Body of pancreas (tissue), 4 donors: ENCODE measurements at regions of chr2 and their contacts with region 1.

Region 1: DNA sequence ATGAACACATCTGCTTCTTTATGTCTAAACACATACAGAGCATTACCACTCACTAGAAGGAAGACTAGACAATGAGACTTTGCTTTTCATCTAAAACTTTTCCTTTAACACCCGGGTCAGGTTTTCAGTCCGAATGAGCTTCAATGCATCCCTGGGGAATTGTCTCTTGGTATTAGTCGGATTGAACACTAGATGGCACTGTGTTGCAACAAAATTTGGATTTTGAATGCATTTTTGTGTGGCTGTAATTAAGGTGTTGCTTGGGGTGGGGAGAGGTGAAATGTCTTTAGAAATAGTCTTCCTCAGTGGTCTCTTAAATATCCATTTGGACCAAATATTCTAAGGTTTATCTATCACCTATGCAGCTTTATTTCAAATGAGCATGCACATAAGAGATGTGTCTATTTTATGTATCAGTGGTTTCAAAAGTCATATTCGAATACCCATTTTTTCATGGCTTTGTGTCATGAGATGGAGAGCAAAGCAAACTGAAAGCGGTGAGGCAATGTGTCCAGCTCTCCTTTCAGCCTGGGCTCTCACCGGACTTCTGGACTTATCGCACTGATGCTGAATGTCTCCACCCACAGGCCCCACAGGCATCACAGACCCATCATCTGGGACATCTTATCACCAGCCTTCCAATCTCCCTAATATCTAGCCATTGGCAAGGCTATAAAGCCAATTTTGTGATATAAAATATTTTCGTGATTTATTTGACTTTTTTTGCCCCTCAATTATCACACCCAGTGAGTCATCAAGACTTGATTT is 510.3 kb downstream of the RNF144A start:
- DNase-seq: peak in 1 of 4 donors; percentile 15
- ATAC-seq: peak; percentile 62
- H3K4me3 ChIP-seq: no peak overlapping the region
- H3K27ac ChIP-seq: no peak overlapping the region
- H3K4me1 ChIP-seq: no peaks in the 10 kb centered on the region
- H3K27me3 ChIP-seq: no peaks in the 10 kb centered on the region
- CTCF ChIP-seq: peak; percentile 43 to 78 (median 75)
- POLR2A ChIP-seq: no peak

Region 2: DNA sequence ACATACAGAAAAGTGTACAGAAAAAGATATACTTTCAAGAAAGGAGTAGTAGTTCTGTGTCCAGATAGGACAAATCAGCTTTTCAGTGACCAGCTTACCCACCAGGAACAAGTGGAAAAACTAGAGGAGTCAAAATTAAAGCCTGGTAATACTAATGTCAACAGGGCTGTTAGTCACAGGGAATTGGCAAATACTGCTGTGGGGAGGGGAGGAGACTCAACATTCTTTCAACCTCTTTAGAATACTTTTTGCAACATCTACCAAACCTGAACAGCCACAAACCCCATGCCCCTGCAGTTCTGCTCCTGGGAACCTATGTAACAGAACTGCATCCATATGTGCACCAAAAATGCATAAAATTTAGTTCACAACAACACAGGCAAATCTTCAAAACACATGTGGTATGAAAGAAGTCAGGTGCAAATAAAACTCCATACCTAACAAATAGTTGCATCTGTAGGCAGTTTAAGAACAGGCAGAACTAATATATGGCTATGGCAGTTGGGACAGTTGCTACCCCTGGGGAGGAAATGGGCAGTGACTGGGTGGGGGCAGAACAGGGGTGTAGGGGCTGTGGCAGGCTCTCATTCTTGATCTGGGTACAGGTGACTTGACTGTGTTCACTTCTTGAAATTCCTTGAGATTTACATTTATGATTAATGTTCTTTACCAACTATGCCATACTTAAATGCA is 571.5 kb before region 1 on chr2:
- intact Hi-C with region 1: no loop called
- DNase-seq: no peak
- ATAC-seq: no peak
- H3K4me3 ChIP-seq: no peak overlapping the region
- H3K27ac ChIP-seq: no peak overlapping the region
- H3K4me1 ChIP-seq: no peaks in the 10 kb centered on the region
- H3K27me3 ChIP-seq: no peaks in the 10 kb centered on the region
- CTCF ChIP-seq: no peak
- POLR2A ChIP-seq: no peak

Region 3: GRCh38 chr2:7672027-7672684 is 244.7 kb after region 1 on chr2:
- intact Hi-C with region 1: loop called (anchors 10 kb)
- DNase-seq: peak; percentile 60 to 82 (median 73)
- ATAC-seq: peak; percentile 35
- H3K4me3 ChIP-seq: no peak overlapping the region
- H3K27ac ChIP-seq: no peak overlapping the region
- H3K4me1 ChIP-seq: no peaks in the 10 kb centered on the region
- H3K27me3 ChIP-seq: no peaks in the 10 kb centered on the region
- CTCF ChIP-seq: peak; percentile 57 to 80 (median 72)
- POLR2A ChIP-seq: no peak

Region 4: GRCh38 chr2:8685697-8686358 is 1258.4 kb after region 1 on chr2:
- intact Hi-C with region 1: loop called (anchors 5 kb)
- DNase-seq: peak; percentile 63 to 79 (median 73)
- ATAC-seq: peak; percentile 36
- H3K4me3 ChIP-seq: peak overlapping the region in 1 of 2 donors; percentile 11
- H3K27ac ChIP-seq: peak overlapping the region; percentile 60 to 82 (median 80)
- H3K4me1 ChIP-seq: peaks cover 19% of the 10 kb centered on the region
- H3K27me3 ChIP-seq: no peaks in the 10 kb centered on the region
- CTCF ChIP-seq: peak; percentile 65 to 99 (median 96)
- POLR2A ChIP-seq: no peak